Right ventricle myocardium superior (tissue), 1 donor: ENCODE measurements at regions of chr5 and their contacts with region 1.

Region 1: DNA sequence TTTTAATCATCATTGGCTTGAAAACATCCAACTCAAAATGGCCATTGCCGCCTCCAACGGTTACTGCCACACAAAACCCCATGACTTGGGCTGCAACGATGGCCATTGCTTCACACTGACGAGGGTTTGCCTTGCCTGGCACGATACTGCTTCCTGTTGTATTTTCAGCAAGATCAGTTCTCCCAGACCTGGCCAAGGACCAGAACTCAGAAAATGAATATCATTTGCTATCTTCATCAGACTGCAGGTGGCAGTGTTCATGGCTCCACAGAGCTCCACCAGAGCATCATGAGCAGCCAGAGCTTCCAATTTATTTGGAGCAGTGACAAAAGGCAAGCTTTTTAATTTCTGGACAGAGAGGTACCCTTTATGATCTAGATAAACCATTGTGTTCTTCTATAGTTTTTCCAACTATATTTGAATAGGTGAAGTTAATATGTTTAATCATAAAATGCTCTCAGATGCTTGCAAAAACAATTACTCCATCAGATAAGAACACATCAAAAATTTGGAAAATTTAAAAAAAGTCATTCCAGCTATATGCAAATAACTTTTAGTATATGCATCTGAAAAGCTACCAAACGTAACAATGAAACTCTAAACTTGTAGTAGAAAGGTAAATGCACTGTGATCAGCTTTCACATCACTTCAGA is 10.4 kb downstream of the AMACR start:
- DNase-seq: peak; percentile 52
- ATAC-seq: peak; percentile 93

Region 2: DNA sequence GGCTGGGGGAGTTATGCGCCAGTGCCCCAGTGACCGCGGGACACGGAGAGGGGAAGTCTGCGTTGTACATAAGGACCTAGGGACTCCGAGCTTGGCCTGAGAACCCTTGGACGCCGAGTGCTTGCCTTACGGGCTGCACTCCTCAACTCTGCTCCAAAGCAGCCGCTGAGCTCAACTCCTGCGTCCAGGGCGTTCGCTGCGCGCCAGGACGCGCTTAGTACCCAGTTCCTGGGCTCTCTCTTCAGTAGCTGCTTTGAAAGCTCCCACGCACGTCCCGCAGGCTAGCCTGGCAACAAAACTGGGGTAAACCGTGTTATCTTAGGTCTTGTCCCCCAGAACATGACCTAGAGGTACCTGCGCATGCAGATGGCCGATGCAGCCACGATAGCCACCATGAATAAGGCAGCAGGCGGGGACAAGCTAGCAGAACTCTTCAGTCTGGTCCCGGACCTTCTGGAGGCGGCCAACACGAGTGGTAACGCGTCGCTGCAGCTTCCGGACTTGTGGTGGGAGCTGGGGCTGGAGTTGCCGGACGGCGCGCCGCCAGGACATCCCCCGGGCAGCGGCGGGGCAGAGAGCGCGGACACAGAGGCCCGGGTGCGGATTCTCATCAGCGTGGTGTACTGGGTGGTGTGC is 61.0 kb before region 1 on chr5 and contains the start of gene RXFP3:
- intact Hi-C with region 1: no loop called
- DNase-seq: no peak
- ATAC-seq: peak; percentile 50
- total RNA-seq, gene RXFP3: not detected

Region 3: DNA sequence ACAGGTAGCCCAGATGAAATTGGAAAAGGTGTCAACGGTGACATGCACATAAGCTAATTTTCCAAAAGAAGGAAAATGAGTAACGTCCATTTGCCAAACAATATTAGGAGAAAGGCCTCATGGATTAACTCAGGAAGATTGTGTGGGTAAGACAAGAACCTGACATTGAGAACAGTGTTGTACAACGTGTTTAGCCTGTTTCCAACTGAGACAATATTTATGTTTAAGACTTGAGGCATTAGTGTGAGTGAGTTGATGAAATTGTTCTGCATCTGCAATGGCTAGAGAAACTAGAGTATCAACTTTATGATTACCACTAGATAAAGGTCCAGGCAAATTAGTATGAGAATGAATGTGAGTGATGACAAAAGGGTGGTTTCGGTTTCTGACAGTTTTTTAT is 467.4 kb after region 1 on chr5:
- intact Hi-C with region 1: loop called (anchors 5 kb)
- DNase-seq: no peak
- ATAC-seq: no peak